Activated B cell treated with CpG ODN at 0.5 μM for 24 hours (primary cell): ENCODE measurements at regions of chr3 and their contacts with region 1.

Region 1: GRCh38 chr3:89113903-89114840 is 6.8 kb downstream of the EPHA3 start:
- DNase-seq: peak; percentile 16
- ATAC-seq: peak; percentile 69
- H3K4me3 Mint-ChIP-seq: peak overlapping the region; percentile 71
- H3K27ac Mint-ChIP-seq: no peak overlapping the region
- H3K4me1 Mint-ChIP-seq: peaks cover 9% of the 10 kb centered on the region
- H3K27me3 Mint-ChIP-seq: peaks cover 18% of the 10 kb centered on the region
- CTCF ChIP-seq: no peak

Region 2: GRCh38 chr3:88203642-88204055 is 910.5 kb before region 1 on chr3:
- CTCF ChIA-PET with region 1: no interaction called
- POLR2A ChIA-PET with region 1: no interaction called
- intact Hi-C with region 1: loop called (anchors 1 kb)
- DNase-seq: peak; percentile 32
- ATAC-seq: peak; percentile 71
- H3K4me3 Mint-ChIP-seq: no peak overlapping the region
- H3K27ac Mint-ChIP-seq: no peak overlapping the region
- H3K4me1 Mint-ChIP-seq: no peaks in the 10 kb centered on the region
- H3K27me3 Mint-ChIP-seq: peaks cover 2% of the 10 kb centered on the region
- CTCF ChIP-seq: no peak

Region 3: GRCh38 chr3:88219138-88219792 is 894.9 kb before region 1 on chr3:
- CTCF ChIA-PET with region 1: interaction called, 4 read pairs
- POLR2A ChIA-PET with region 1: no interaction called
- intact Hi-C with region 1: loop called (anchors 1 kb)
- DNase-seq: no peak
- ATAC-seq: peak; percentile 64
- H3K4me3 Mint-ChIP-seq: no peak overlapping the region
- H3K27ac Mint-ChIP-seq: no peak overlapping the region
- H3K4me1 Mint-ChIP-seq: peaks cover 5% of the 10 kb centered on the region
- H3K27me3 Mint-ChIP-seq: peaks cover 2% of the 10 kb centered on the region
- CTCF ChIP-seq: no peak

Region 4: DNA sequence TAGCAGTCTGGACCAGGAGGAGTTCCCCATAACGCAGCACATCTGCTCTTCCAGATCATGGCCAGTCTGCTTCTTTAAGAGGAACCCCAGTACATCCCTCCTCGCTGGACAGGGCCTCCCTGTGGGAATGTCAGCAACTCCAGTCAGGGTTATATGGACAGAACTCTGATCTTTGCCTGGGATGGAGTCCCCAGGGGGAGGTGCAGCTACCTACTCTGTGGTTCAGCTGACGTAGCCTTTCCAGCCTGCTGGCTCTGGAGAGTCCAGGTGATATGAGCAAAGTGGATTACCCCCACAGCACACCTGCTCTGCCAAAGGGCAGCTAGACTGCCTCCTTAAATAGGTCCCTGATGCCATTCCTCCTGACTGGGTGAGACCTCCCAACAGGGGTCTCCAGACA is 423.9 kb before region 1 on chr3:
- CTCF ChIA-PET with region 1: no interaction called
- POLR2A ChIA-PET with region 1: no interaction called
- intact Hi-C with region 1: no loop called
- DNase-seq: no peak
- ATAC-seq: no peak
- H3K4me3 Mint-ChIP-seq: no peak overlapping the region
- H3K27ac Mint-ChIP-seq: no peak overlapping the region
- H3K4me1 Mint-ChIP-seq: no peaks in the 10 kb centered on the region
- H3K27me3 Mint-ChIP-seq: no peaks in the 10 kb centered on the region
- CTCF ChIP-seq: no peak